Caki2 (cell line): ENCODE measurements at regions of chr22 and their contacts with region 1.

Region 1: DNA sequence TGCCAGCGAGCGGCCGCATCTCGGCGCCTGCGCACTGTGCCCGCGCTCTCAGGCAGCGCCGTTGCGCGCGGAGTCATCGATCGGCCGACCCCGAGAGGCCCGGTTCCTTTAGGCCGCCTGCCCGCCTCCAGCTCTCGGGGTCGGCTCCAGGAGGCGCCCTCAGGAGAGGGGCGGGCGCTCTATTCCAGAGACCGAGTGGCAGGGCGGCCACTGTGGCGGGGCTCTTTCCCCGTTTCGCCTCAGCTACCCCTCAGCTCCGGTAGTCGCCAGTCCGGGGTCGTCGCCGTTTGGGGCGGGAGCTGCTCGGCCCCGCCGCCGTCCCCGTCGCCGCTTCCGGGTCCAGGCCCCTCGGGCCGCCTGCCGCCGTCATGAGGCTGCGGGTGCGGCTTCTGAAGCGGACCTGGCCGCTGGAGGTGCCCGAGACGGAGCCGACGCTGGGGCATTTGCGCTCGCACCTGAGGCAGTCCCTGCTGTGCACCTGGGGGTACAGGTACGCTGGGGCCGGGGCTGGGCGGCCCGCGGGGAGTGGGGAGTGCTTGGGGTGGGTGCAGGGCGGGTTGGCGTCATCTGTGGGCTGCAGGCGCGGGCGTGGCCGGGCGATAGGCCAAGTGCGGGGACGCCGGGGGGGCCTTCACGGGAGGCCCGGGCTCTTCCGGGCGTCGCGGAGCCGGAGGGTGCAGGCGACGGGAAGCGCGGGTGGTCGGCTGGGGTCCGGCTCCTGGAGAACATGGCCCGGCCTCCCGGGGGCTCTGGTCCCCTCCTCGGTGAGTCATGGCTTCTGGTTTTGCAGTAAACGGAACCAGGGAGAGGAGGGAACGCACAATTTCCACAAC is at the start of gene FBXO7:
- DNase-seq: peak; percentile 93
- total RNA-seq, gene FBXO7: 136 and 145 TPM in 2 replicates

Region 2: DNA sequence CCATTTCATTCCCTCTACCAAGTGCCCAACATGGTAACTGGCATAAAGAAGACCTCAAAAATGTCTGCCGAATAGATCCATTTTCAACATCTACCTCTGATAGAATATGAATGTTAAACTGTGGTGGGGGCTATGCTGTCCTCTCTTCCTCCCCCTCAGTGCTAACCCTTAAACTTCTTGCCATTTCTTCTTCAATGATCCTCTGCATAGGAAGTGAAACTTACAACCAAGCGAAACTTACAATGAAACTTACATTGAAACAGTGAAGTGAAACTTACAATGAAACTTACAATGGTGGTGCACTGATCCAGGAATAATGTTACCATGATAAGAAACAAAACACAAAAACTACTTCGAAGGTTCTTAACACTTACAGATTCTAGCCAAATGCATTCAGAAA is 67.5 kb before region 1 on chr22:
- in situ Hi-C with region 1: loop called (anchors 10 kb)
- DNase-seq: no peak